Dendritic cell treated with granulocyte-macrophage colony-stimulating factor and Interleukin-4, amounts not matched to agents 40 ng/mL and 50 ng/mL, for 4 days (primary cell): ENCODE measurements at regions of chr7 and their contacts with region 1.

Region 1: DNA sequence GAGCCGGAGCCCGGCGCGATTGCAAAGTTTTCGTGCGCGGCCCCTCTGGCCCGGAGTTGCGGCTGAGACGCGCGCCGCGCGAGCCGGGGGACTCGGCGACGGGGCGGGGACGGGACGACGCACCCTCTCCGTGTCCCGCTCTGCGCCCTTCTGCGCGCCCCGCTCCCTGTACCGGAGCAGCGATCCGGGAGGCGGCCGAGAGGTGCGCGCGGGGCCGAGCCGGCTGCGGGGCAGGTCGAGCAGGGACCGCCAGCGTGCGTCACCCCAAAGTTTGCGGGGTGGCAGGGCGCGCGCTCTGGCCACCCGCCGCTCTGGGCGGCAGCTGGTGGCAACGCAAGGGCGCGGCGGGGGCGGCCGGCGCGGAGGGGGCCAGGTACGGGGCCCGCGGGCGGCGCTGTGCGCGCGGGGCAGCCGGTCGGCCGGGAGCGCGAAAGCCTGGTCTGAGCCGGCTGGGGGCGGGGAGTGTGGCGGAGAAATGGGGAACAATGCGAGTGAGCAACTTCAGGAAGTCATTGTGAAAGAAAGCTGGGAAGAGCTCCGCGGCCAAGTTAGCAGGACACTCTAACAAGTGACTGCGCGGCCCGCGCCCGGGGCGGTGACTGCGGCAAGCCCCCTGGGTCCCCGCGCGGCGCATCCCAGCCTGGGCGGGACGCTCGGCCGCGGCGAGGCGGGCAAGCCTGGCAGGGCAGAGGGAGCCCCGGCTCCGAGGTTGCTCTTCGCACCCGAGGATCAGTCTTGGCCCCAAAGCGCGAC is at the start of gene IKZF1:
- H3K4me3 Mint-ChIP-seq: peak within 1 kb of the TSS; percentile 90
- H3K27ac Mint-ChIP-seq: peak within 1 kb of the TSS; percentile 88
- H3K4me1 Mint-ChIP-seq: peaks cover 41% of the 10 kb centered on the region
- H3K27me3 Mint-ChIP-seq: peaks cover 8% of the 10 kb centered on the region

Region 2: GRCh38 chr7:49279891-49280290 is 1024.4 kb before region 1 on chr7:
- intact Hi-C with region 1: no loop called
- H3K4me3 Mint-ChIP-seq: no peak overlapping the region
- H3K27ac Mint-ChIP-seq: no peak overlapping the region
- H3K4me1 Mint-ChIP-seq: no peaks in the 10 kb centered on the region
- H3K27me3 Mint-ChIP-seq: no peaks in the 10 kb centered on the region

Region 3: DNA sequence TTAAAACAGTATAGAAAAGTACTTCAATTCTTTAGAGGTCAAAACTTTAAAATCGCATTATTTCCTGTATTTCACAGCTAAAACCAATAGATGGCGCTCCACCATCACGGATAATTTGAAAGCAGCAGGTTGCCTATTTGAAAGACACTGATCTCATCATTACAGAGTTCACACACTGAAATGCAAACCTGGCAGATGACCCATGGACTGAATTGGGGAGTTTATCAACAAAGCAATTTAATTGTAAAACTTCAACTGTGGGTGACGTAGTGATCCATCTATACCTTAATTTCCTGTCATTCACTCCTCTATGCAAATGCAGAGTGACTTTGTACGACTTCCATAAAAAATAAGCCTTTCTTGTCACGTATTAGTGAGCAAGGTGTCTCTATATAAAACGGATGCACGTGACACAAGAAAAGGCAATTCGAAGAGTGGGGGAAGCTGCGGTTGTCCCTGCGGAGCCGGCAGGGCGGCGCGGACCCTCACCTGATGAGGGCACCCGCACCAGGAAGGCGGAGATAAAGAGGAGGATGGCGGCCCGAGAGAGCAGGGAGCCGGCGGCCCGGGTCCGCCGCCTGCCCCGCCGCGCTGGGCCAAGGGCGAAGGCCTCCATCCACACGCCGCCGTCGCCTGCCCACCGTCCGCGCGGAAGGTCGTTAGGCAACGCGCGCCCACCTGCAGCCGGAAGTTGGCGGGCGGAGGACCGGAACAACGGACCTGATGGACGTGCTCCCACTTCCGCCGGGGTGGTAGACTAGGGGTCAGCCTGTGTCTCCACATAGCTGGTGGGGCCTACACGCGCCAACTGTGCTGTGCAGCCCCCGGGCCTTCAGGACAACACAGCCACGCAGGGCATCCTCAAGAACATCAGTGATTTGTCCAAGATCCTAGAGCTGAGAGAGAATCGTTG is 211.5 kb before region 1 on chr7 and contains the start of gene ZPBP:
- intact Hi-C with region 1: no loop called
- H3K4me3 Mint-ChIP-seq: peak within 1 kb of the TSS; percentile 65
- H3K27ac Mint-ChIP-seq: no peak within 1 kb of the TSS
- H3K4me1 Mint-ChIP-seq: peaks cover 9% of the 10 kb centered on the region
- H3K27me3 Mint-ChIP-seq: peaks cover 11% of the 10 kb centered on the region

Region 4: GRCh38 chr7:50212666-50213621 is 91.4 kb before region 1 on chr7:
- intact Hi-C with region 1: loop called (anchors 5 kb)
- H3K4me3 Mint-ChIP-seq: no peak overlapping the region
- H3K27ac Mint-ChIP-seq: peak overlapping the region; percentile 41
- H3K4me1 Mint-ChIP-seq: peaks cover 79% of the 10 kb centered on the region
- H3K27me3 Mint-ChIP-seq: no peaks in the 10 kb centered on the region

Region 5: DNA sequence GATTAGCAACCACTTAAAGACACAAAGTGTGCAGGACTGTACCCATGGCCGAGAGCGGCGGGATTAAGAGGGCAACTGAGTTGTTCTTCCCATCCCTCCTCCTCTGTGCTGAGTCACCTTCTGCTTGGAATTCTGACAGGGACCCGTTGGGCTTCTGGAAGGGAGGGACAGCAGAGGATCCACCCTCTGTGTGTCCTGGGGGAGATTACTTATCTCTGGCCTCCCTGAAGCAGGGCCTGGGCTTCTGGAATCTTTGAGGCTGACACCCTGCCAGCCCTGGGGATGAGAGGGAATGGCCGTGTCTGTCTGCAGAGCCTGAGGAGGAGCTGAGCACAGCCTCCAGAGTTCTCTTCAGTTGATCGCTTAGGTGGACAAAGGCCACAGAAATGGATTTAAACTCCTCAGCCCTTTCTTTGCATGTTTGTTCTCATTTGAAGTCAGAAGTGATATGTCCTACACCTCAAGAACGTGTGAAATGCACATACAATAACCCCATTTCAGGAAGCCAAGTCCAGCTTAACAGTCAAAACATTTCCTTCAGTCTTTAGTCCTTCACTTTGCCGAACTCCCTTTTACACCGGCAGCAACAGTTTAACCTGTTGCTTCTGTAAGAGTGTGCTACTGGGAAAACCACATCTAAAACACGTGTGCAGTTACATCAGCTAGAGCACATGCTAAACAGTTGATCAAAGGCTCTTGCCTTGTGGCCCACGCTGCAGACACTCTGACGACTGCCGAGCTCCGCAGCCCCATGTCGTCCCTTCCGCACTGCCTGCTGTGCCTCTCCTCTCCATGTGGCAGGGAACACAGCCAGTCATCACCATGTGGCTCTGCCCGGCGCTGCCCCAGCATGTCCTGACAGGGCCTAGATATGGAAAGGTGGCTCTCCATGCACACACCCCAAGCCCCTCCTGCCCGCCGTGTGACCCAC is 55.9 kb after region 1 on chr7:
- intact Hi-C with region 1: loop called (anchors 2 kb)
- H3K4me3 Mint-ChIP-seq: no peak overlapping the region
- H3K27ac Mint-ChIP-seq: peak overlapping the region; percentile 94
- H3K4me1 Mint-ChIP-seq: peaks cover 76% of the 10 kb centered on the region
- H3K27me3 Mint-ChIP-seq: no peaks in the 10 kb centered on the region

Region 6: GRCh38 chr7:50418086-50418515 is 113.8 kb after region 1 on chr7:
- intact Hi-C with region 1: loop called (anchors 10 kb)
- H3K4me3 Mint-ChIP-seq: no peak overlapping the region
- H3K27ac Mint-ChIP-seq: no peak overlapping the region
- H3K4me1 Mint-ChIP-seq: peaks cover 46% of the 10 kb centered on the region
- H3K27me3 Mint-ChIP-seq: no peaks in the 10 kb centered on the region